HepG2 (cell line): ENCODE measurements at regions of chr18 and their contacts with region 1.

Region 1: GRCh38 chr18:37710726-37711125 is 145.1 kb upstream of the CELF4 start:
- DNase-seq: no peak
- ATAC-seq: no peak
- H3K4me3 ChIP-seq: no peak overlapping the region
- H3K27ac ChIP-seq: no peak overlapping the region
- H3K4me1 ChIP-seq: no peaks in the 10 kb centered on the region
- H3K27me3 ChIP-seq: no peaks in the 10 kb centered on the region
- CTCF ChIP-seq: no peak
- EP300 ChIP-seq: no peak
- POLR2A ChIP-seq: no peak
- RAD21 ChIP-seq: no peak

Region 2: DNA sequence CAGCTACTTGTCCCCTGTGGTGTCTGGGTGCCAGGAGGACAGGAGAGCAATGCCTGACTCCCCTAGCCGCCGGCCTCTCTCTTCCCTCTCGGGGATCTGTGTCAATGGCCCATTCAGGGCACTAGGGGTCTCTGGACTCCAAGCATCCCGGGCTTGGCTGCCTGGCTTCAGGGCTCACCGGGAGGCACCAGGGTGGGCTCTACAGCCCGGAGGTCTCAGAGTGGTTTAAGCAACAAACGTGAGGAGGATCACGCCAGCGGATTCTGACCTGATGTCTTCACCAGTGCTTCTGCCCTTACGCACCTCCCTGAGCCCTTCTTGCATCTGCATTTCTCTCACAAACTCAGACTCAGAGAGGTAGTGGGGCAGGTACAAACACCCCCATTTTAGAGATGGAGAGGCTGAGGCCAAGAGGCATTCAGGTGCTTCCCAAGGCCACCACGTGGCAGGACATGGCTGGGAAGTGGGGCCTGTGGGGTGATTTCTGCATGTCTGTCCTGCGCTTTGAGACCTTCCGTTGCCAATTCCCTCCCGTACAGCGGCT is 388.2 kb before region 1 on chr18:
- CTCF ChIA-PET with region 1: no interaction called
- POLR2A ChIA-PET with region 1: no interaction called
- in situ Hi-C with region 1: no loop called
- intact Hi-C with region 1: no loop called
- DNase-seq: peak; percentile 31
- ATAC-seq: peak; percentile 92
- H3K4me3 ChIP-seq: no peak overlapping the region
- H3K27ac ChIP-seq: no peak overlapping the region
- H3K4me1 ChIP-seq: no peaks in the 10 kb centered on the region
- H3K27me3 ChIP-seq: peaks cover 3 to 35% of the 10 kb centered on the region in 2 experiments; a peak in 4 of 5 replicates
- CTCF ChIP-seq: peak; percentile 92
- EP300 ChIP-seq: no peak
- POLR2A ChIP-seq: no peak
- RAD21 ChIP-seq: peak; percentile 59; the same call in 1 of the 2 replicates

Region 3: DNA sequence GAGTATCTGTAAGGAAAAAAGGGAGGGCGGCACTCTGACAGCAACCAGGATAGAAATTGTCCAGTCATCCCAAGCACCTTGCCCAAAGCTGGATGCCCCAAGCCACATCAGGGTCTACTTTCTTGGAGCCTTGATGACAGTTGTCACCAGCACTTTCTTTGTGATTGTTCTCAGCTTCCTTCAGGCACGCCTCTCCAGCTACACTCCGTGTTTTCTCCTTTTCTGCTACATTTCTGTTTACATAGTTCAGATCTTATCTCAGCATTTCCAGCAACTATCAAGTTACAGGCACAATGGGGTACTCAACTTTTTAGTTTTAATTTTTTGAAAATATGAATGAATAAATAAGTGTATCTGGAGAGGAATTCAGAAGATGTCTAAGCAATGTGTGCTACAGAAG is 29.8 kb before region 1 on chr18:
- CTCF ChIA-PET with region 1: no interaction called
- POLR2A ChIA-PET with region 1: no interaction called
- in situ Hi-C with region 1: no loop called
- intact Hi-C with region 1: loop called (anchors 1 kb)
- DNase-seq: no peak
- ATAC-seq: no peak
- H3K4me3 ChIP-seq: no peak overlapping the region
- H3K27ac ChIP-seq: no peak overlapping the region
- H3K4me1 ChIP-seq: no peaks in the 10 kb centered on the region
- H3K27me3 ChIP-seq: peaks cover 0 to 4% of the 10 kb centered on the region in 2 experiments; a peak in 1 of 5 replicates
- CTCF ChIP-seq: no peak
- EP300 ChIP-seq: no peak
- POLR2A ChIP-seq: no peak
- RAD21 ChIP-seq: no peak